Head of caudate nucleus (tissue), 42 donors: ENCODE measurements at regions of chr15 and their contacts with region 1.

Region 1: GRCh38 chr15:74781431-74782258 is at the start of gene CSK:
- DNase-seq: peak in 40 of 42 donors; percentile 39 to 88 (median 75)

Region 2: DNA sequence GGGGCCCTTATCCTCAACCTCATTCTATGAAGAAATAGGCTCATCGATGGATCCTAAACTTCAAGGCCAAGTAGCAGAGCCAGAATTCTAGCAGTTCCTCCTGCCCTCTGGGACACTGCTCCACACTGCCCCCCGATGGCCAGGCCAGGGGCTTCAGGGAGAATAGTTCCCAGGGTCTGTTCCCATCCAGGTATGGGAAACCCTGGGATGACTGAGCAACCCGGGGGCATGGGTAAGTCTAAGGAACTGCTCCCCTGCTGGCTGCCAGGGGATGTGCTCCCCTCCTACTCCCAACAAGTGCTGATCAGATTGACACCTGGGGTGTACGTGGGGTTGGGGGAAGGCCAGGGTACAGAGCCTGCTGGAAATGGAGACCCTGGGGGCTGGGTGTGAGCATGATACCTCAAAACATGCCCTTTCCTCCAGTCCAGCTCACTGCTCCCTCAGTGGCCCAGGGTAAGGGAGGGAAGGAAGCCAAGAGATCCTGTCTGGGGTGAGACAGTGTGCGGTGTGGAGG is 53.7 kb after region 1 on chr15:
- intact Hi-C with region 1: loop called (anchors 5 kb)
- DNase-seq: peak in 41 of 42 donors; percentile 22 to 85 (median 63)

Region 3: DNA sequence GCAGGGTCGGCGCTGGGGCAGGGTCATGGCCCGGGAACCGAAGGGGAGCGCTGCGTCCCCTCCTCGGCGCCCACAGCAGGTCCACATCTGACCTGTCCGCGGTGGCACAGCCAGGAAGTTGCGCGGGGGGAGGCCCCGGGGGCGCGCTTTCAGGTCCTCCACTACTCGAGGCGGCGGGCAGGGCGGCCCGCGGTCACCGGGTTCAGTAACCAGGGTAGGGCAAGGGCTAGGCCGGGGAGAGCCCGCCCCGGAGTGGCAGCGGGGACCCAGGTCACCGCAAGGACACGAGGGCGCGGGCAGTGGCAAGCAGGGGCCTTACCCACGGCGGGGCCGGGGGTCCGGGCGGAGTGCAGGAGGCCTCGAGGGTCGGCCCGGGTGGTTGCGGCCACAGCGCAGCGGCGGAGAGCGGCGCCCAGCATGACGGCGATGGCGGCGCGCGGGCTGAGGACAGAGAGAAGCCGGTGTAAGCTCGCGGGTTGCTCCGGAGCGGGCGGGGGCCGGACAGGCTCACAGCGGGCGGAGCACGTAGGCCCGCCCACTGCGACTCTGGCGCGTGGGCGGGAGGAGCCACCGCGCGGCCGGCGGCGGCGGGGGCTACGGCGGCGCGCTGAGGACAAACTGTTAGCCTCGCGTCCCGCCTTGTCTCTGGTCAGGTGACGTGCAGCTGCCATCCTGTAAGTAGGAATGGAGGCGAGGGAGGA is 156.1 kb after region 1 on chr15 and contains the start of gene COX5A:
- intact Hi-C with region 1: loop called (anchors 5 kb)
- DNase-seq: peak; percentile 86 to 97 (median 94)